ENCODE measurements at regions of chr1 and their contacts with region 1.

Region 1: GRCh38 chr1:114511032-114511785 is at the start of gene TRIM33:
- DNase-seq: peak; percentile 84 to 98 (median 91)
- ATAC-seq: peak; percentile 80
- H3K4me3 ChIP-seq: peak within 1 kb of the TSS; percentile 78 to 96
- H3K4me3 Mint-ChIP-seq: peak within 1 kb of the TSS; percentile 96
- H3K27ac ChIP-seq: peak within 1 kb of the TSS; percentile 93 to 100
- H3K27ac Mint-ChIP-seq: peak within 1 kb of the TSS; percentile 99
- H3K4me1 ChIP-seq: peaks cover 40% of the 10 kb centered on the region
- H3K4me1 Mint-ChIP-seq: peaks cover 54% of the 10 kb centered on the region
- H3K27me3 ChIP-seq: no peaks in the 10 kb centered on the region
- H3K27me3 Mint-ChIP-seq: no peaks in the 10 kb centered on the region
- CTCF ChIP-seq: no peak
- total RNA-seq, gene TRIM33: 50.4 to 50.7 TPM

Region 2: DNA sequence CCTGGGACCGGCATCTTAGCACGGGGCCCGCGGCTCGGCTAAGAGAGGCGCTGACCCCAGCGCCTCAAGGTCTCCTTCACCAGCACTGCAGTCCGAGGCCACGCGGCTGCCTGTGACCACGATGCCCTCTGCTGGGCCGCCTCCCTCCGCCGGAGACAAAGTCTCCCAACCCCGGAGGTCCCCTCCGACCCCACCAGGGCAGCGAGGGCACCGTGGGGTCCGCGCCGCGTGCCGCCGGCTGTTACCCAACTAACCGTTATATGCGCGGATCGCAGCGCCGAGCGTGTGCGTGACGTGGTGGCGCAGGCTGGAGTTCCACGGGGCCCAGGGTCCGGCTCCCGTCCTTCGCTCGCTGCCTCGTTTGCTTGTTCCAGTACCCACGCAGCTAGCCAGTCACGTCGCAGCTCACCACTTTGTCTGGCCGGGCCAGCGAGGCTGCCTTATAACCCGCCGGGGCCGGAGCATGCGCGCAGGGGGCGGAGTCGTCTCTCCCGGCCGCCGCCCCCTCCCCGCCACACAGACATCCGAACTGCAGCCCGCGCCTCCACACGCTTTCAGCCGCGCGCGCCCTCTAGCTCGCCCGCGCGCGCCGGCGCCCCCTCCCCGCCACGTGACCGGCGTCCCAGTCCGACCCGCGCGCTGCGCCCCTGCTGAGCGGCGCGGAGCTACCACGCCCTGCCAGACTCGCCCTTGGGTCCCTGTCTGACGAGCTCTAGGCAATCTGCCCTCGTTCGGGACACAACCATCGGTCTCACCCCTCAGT is 1555.2 kb before region 1 on chr1 and contains the start of gene SLC16A1:
- CTCF ChIA-PET with region 1: no interaction called
- POLR2A ChIA-PET with region 1: interaction called, 3 read pairs
- intact Hi-C with region 1: loop called (anchors 2 to 10 kb)
- DNase-seq: peak; percentile 68 to 92 (median 86)
- ATAC-seq: peak; percentile 78
- H3K4me3 ChIP-seq: peak within 1 kb of the TSS; percentile 97 to 98
- H3K4me3 Mint-ChIP-seq: peak within 1 kb of the TSS; percentile 98
- H3K27ac ChIP-seq: peak within 1 kb of the TSS; percentile 79 to 87
- H3K27ac Mint-ChIP-seq: peak within 1 kb of the TSS; percentile 90
- H3K4me1 ChIP-seq: peaks cover 25% of the 10 kb centered on the region
- H3K4me1 Mint-ChIP-seq: peaks cover 63% of the 10 kb centered on the region
- H3K27me3 ChIP-seq: no peaks in the 10 kb centered on the region
- H3K27me3 Mint-ChIP-seq: no peaks in the 10 kb centered on the region
- CTCF ChIP-seq: no peak
- total RNA-seq, gene SLC16A1: 34.0 to 34.1 TPM

Region 3: GRCh38 chr1:114467488-114467887 is 43.7 kb before region 1 on chr1:
- CTCF ChIA-PET with region 1: no interaction called
- POLR2A ChIA-PET with region 1: interaction called, 9 read pairs
- intact Hi-C with region 1: loop called in 1 of 2 experiments (anchors 10 kb)
- DNase-seq: peak in 2 of 9 experiments; percentile 17 to 36
- ATAC-seq: peak; percentile 54
- H3K4me3 ChIP-seq: no peak overlapping the region
- H3K4me3 Mint-ChIP-seq: peak overlapping the region; percentile 57
- H3K27ac ChIP-seq: no peak overlapping the region
- H3K27ac Mint-ChIP-seq: peak overlapping the region; percentile 68
- H3K4me1 ChIP-seq: peaks cover 32% of the 10 kb centered on the region
- H3K4me1 Mint-ChIP-seq: peaks cover 60% of the 10 kb centered on the region
- H3K27me3 ChIP-seq: no peaks in the 10 kb centered on the region
- H3K27me3 Mint-ChIP-seq: no peaks in the 10 kb centered on the region
- CTCF ChIP-seq: no peak

Region 4: GRCh38 chr1:114670083-114671010 is 159.1 kb after region 1 on chr1:
- CTCF ChIA-PET with region 1: no interaction called
- POLR2A ChIA-PET with region 1: interaction called, 4 read pairs
- intact Hi-C with region 1: loop called (anchors 2 to 5 kb)
- DNase-seq: peak in 8 of 9 experiments; percentile 2 to 90 (median 86)
- ATAC-seq: peak; percentile 96
- H3K4me3 ChIP-seq: peak overlapping the region; percentile 77 to 79
- H3K4me3 Mint-ChIP-seq: peak overlapping the region; percentile 98
- H3K27ac ChIP-seq: peak overlapping the region in 1 of 2 experiments; percentile 49
- H3K27ac Mint-ChIP-seq: peak overlapping the region; percentile 92
- H3K4me1 ChIP-seq: peaks cover 5% of the 10 kb centered on the region
- H3K4me1 Mint-ChIP-seq: peaks cover 14% of the 10 kb centered on the region
- H3K27me3 ChIP-seq: no peaks in the 10 kb centered on the region
- H3K27me3 Mint-ChIP-seq: peaks cover 11% of the 10 kb centered on the region
- CTCF ChIP-seq: no peak

Region 5: GRCh38 chr1:114757455-114758250 is 246.4 kb after region 1 on chr1 and contains the start of gene CSDE1:
- CTCF ChIA-PET with region 1: interaction called, 4 read pairs
- POLR2A ChIA-PET with region 1: interaction called, 4 read pairs
- intact Hi-C with region 1: loop called (anchors 1 to 2 kb)
- DNase-seq: peak; percentile 94 to 99 (median 97)
- ATAC-seq: peak; percentile 79
- H3K4me3 ChIP-seq: peak within 1 kb of the TSS; percentile 95 to 100
- H3K4me3 Mint-ChIP-seq: peak within 1 kb of the TSS; percentile 100
- H3K27ac ChIP-seq: peak within 1 kb of the TSS; percentile 97 to 100
- H3K27ac Mint-ChIP-seq: peak within 1 kb of the TSS; percentile 100
- H3K4me1 ChIP-seq: peaks cover 44% of the 10 kb centered on the region
- H3K4me1 Mint-ChIP-seq: peaks cover 51% of the 10 kb centered on the region
- H3K27me3 ChIP-seq: no peaks in the 10 kb centered on the region
- H3K27me3 Mint-ChIP-seq: no peaks in the 10 kb centered on the region
- CTCF ChIP-seq: no peak
- total RNA-seq, gene CSDE1: 732 to 774 TPM

Region 6: DNA sequence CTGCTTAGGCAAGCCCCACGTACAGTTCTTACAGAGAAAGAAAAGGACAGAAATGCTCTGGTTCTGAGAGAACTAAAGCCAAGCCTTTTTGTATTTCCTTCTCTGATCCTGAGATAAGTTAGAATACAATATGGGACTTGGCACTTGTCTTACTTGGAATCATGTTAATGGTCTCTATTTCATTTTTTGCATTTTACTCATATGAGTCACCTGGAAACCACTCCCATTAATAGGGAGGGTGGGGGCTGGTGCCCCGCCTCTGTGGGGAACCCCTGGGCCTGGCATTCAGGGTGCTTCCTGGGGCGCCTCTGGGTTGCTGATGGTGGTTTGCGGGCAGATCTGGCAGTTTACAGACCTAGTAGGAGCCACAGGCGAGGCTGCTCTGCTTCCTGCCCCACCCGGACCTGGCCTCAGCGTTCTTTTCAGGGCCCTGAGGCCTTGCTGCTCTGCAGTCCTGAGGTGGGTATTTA is 551.4 kb after region 1 on chr1:
- CTCF ChIA-PET with region 1: no interaction called
- POLR2A ChIA-PET with region 1: no interaction called
- intact Hi-C with region 1: loop called in 1 of 2 experiments (anchors 5 kb)
- DNase-seq: peak; percentile 91 to 99 (median 94)
- ATAC-seq: peak; percentile 89
- H3K4me3 ChIP-seq: peak overlapping the region in 1 of 2 experiments; percentile 17
- H3K4me3 Mint-ChIP-seq: peak overlapping the region; percentile 79
- H3K27ac ChIP-seq: peak overlapping the region; percentile 74 to 93
- H3K27ac Mint-ChIP-seq: peak overlapping the region; percentile 100
- H3K4me1 ChIP-seq: peaks cover 35% of the 10 kb centered on the region
- H3K4me1 Mint-ChIP-seq: peaks cover 43% of the 10 kb centered on the region
- H3K27me3 ChIP-seq: no peaks in the 10 kb centered on the region
- H3K27me3 Mint-ChIP-seq: no peaks in the 10 kb centered on the region
- CTCF ChIP-seq: no peak

Measured in CD8-positive, alpha-beta T cell (primary cell).